Activated CD4-positive, alpha-beta memory T cell treated with anti-CD3 and anti-CD28 coated beads for 36 hours (primary cell): ENCODE measurements at regions of chr4 and their contacts with region 1.

Region 1: GRCh38 chr4:121869841-121870656 is at the start of gene BBS7:
- DNase-seq: peak; percentile 98
- H3K4me3 Mint-ChIP-seq: peak within 1 kb of the TSS; percentile 95
- H3K27ac Mint-ChIP-seq: peak within 1 kb of the TSS; percentile 74
- H3K4me1 Mint-ChIP-seq: peaks cover 10% of the 10 kb centered on the region
- H3K27me3 Mint-ChIP-seq: peaks cover 6% of the 10 kb centered on the region
- total RNA-seq, gene BBS7: 15.2 to 17.9 TPM

Region 2: DNA sequence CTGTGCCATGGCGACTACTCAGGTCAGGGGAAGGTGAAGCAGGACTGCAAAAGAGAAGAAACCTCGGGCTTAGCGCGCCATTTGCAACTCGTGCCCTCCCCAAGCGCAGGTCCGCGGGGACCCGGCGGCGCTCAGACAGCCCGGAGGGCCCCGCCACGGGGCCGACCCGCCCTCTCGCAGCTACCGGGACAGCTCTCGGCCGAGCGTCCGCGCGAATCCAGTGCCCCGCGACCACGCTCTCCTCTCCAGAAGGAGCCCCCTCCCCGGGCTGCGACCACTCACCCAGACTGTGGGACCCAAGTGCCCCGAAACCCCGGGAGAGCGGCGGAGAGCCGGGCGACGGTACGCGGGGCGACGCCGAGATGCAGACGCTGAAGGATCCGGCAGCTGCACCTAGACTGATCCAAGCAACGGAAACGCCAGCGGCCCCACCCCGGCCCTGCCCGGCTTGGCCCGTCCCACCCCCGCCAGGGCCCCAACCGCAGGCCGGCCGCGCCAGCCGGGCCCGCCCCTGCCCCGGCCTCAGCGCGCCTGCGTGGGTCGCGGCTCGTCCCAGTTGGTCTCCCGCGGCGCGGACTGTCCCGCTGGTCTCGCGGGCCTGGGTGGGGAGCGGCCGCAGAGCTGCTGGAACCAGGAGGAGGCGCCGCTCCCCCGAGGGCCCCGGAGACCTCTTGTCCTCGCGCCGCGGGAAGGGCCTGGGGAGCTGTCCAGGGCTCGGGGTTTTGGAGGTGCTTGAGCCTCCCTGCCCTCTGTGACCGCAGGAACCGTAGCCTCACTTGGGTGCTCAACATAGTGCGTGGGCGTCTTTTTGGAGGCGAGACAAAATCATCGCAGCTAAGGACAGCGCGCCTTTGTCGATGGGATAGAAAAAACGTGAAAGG is 173.2 kb before region 1 on chr4 and contains the start of gene ANXA5:
- CTCF ChIA-PET with region 1: no interaction called
- POLR2A ChIA-PET with region 1: no interaction called
- intact Hi-C with region 1: loop called (anchors 2 kb)
- DNase-seq: peak; percentile 86
- H3K4me3 Mint-ChIP-seq: peak within 1 kb of the TSS; percentile 99
- H3K27ac Mint-ChIP-seq: peak within 1 kb of the TSS; percentile 99
- H3K4me1 Mint-ChIP-seq: peaks cover 37% of the 10 kb centered on the region
- H3K27me3 Mint-ChIP-seq: peaks cover 10% of the 10 kb centered on the region
- total RNA-seq, gene ANXA5: 132 to 140 TPM

Region 3: GRCh38 chr4:121800961-121801714 is 68.9 kb before region 1 on chr4 and contains the start of gene EXOSC9:
- CTCF ChIA-PET with region 1: no interaction called
- POLR2A ChIA-PET with region 1: interaction called, 5 read pairs
- intact Hi-C with region 1: loop called (anchors 1 kb)
- DNase-seq: peak; percentile 95
- H3K4me3 Mint-ChIP-seq: peak within 1 kb of the TSS; percentile 84
- H3K27ac Mint-ChIP-seq: peak within 1 kb of the TSS; percentile 94
- H3K4me1 Mint-ChIP-seq: peaks cover 45% of the 10 kb centered on the region
- H3K27me3 Mint-ChIP-seq: no peaks in the 10 kb centered on the region
- total RNA-seq, gene EXOSC9: 65.9 to 68.0 TPM

Region 4: GRCh38 chr4:121823505-121824170 is 46.4 kb before region 1 on chr4 and contains the start of gene CCNA2:
- CTCF ChIA-PET with region 1: no interaction called
- POLR2A ChIA-PET with region 1: interaction called, 15 read pairs
- intact Hi-C with region 1: loop called (anchors 1 kb)
- DNase-seq: peak; percentile 99
- H3K4me3 Mint-ChIP-seq: peak within 1 kb of the TSS; percentile 97
- H3K27ac Mint-ChIP-seq: peak within 1 kb of the TSS; percentile 81
- H3K4me1 Mint-ChIP-seq: peaks cover 25% of the 10 kb centered on the region
- H3K27me3 Mint-ChIP-seq: no peaks in the 10 kb centered on the region
- total RNA-seq, gene CCNA2: 98.2 to 100 TPM

Region 5: GRCh38 chr4:122117743-122118142 is 247.7 kb after region 1 on chr4:
- CTCF ChIA-PET with region 1: no interaction called
- POLR2A ChIA-PET with region 1: no interaction called
- intact Hi-C with region 1: no loop called
- DNase-seq: peak; percentile 28
- H3K4me3 Mint-ChIP-seq: no peak overlapping the region
- H3K27ac Mint-ChIP-seq: no peak overlapping the region
- H3K4me1 Mint-ChIP-seq: peaks cover 21% of the 10 kb centered on the region
- H3K27me3 Mint-ChIP-seq: no peaks in the 10 kb centered on the region

Region 6: GRCh38 chr4:122732329-122733026 is 862.4 kb after region 1 on chr4 and contains the start of gene BBS12:
- CTCF ChIA-PET with region 1: no interaction called
- POLR2A ChIA-PET with region 1: no interaction called
- intact Hi-C with region 1: loop called (anchors 2 kb)
- DNase-seq: peak; percentile 100
- H3K4me3 Mint-ChIP-seq: peak within 1 kb of the TSS; percentile 87
- H3K27ac Mint-ChIP-seq: peak within 1 kb of the TSS; percentile 87
- H3K4me1 Mint-ChIP-seq: peaks cover 27% of the 10 kb centered on the region
- H3K27me3 Mint-ChIP-seq: no peaks in the 10 kb centered on the region
- total RNA-seq, gene BBS12: 3.7 to 4.3 TPM